ENCODE measurements at regions of chr2 and their contacts with region 1.

Region 1: DNA sequence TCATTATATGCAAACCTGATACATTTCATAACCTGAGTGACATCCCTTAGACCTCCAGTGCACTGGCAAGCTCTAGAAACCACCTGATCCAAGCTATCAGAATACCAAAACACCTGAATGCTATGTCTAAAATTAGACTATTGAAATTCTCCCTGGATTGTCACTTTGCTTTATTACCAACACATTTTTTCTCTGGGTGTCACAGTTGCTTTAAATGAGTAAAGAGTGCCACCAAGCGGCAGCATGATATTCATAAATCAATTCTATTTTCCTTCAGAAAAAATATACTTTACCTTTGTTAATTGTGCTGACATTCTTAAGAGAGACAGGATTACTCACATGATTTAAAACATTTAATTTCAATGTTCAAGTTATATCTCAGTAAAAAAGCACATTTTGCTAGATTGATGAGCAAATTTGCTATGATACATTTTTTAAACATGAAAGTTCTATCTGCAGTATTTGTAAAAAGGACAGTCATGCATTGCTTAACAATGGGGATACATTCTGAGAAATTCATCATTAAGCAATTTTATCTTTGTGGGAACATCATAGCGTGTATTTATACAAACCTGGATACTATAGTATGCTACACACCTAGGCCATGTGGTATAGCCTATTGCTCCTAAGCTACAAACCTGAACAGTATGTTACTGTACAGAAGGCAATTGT is 338.4 kb upstream of the SLC39A10 start:
- DNase-seq: peak in 1 of 2 experiments; percentile 43
- H3K4me3 ChIP-seq: no peak overlapping the region
- H3K4me3 Mint-ChIP-seq: no peak overlapping the region
- H3K27ac Mint-ChIP-seq: no peak overlapping the region
- H3K4me1 ChIP-seq: peaks cover 7% of the 10 kb centered on the region; the same call in 1 of the 2 replicates
- H3K4me1 Mint-ChIP-seq: no peaks in the 10 kb centered on the region
- H3K27me3 ChIP-seq: no peaks in the 10 kb centered on the region
- H3K27me3 Mint-ChIP-seq: no peaks in the 10 kb centered on the region
- CTCF ChIP-seq: peak; percentile 38 to 69

Region 2: DNA sequence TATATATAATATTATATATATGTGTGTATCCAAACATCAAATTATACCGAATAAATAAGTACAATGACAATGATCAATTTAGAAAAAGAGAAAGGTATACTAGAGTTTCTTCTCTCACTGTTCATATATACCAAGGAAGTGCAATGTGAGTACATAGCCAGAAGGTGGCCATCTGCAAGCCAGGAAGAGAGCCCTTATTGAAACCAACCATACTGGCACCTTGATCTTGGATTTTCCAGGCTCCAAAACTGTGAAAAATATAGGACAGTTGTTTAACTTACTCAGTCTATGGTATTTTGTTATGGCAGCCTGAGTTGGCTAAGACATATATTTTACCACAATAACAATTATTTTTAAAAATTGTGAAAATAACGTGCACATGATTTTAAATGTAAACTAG is 1151.8 kb before region 1 on chr2:
- CTCF ChIA-PET with region 1: no interaction called
- POLR2A ChIA-PET with region 1: no interaction called
- intact Hi-C with region 1: loop called (anchors 1 kb)
- DNase-seq: peak in 1 of 2 experiments; percentile 15
- H3K4me3 ChIP-seq: no peak overlapping the region
- H3K4me3 Mint-ChIP-seq: no peak overlapping the region
- H3K27ac Mint-ChIP-seq: no peak overlapping the region
- H3K4me1 ChIP-seq: no peaks in the 10 kb centered on the region
- H3K4me1 Mint-ChIP-seq: no peaks in the 10 kb centered on the region
- H3K27me3 ChIP-seq: no peaks in the 10 kb centered on the region
- H3K27me3 Mint-ChIP-seq: peaks cover 3% of the 10 kb centered on the region
- CTCF ChIP-seq: peak; percentile 66 to 75

Region 3: GRCh38 chr2:194545978-194546377 is 772.6 kb before region 1 on chr2:
- CTCF ChIA-PET with region 1: no interaction called
- POLR2A ChIA-PET with region 1: no interaction called
- intact Hi-C with region 1: loop called (anchors 1 kb)
- DNase-seq: no peak
- H3K4me3 ChIP-seq: no peak overlapping the region
- H3K4me3 Mint-ChIP-seq: no peak overlapping the region
- H3K27ac Mint-ChIP-seq: no peak overlapping the region
- H3K4me1 ChIP-seq: peaks cover 8% of the 10 kb centered on the region; the same call in 1 of the 2 replicates
- H3K4me1 Mint-ChIP-seq: no peaks in the 10 kb centered on the region
- H3K27me3 ChIP-seq: no peaks in the 10 kb centered on the region
- H3K27me3 Mint-ChIP-seq: no peaks in the 10 kb centered on the region
- CTCF ChIP-seq: peak in 1 of 2 experiments; percentile 9

Region 4: DNA sequence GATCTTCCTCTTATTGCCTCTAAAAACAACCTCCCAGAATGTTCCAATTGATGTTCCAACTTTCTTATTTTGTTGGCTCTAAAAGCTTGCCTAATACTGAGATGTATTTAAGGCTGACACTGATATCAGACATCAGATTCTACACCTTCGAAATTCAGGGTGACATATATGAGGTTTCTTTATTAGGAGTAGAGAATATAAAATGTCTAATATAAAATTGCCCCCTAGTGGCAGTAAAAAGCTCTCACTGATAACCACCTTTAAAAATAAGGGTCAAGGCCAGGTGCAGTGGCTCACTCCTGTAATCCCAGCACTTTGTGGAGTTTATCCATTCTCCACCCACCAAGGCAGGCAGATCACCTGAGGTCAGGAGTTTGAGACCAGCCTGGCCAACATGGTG is 451.2 kb before region 1 on chr2:
- CTCF ChIA-PET with region 1: no interaction called
- POLR2A ChIA-PET with region 1: no interaction called
- intact Hi-C with region 1: loop called (anchors 2 kb)
- DNase-seq: no peak
- H3K4me3 ChIP-seq: no peak overlapping the region
- H3K4me3 Mint-ChIP-seq: no peak overlapping the region
- H3K27ac Mint-ChIP-seq: no peak overlapping the region
- H3K4me1 ChIP-seq: no peaks in the 10 kb centered on the region
- H3K4me1 Mint-ChIP-seq: no peaks in the 10 kb centered on the region
- H3K27me3 ChIP-seq: no peaks in the 10 kb centered on the region
- H3K27me3 Mint-ChIP-seq: no peaks in the 10 kb centered on the region
- CTCF ChIP-seq: peak; percentile 21 to 51

Region 5: DNA sequence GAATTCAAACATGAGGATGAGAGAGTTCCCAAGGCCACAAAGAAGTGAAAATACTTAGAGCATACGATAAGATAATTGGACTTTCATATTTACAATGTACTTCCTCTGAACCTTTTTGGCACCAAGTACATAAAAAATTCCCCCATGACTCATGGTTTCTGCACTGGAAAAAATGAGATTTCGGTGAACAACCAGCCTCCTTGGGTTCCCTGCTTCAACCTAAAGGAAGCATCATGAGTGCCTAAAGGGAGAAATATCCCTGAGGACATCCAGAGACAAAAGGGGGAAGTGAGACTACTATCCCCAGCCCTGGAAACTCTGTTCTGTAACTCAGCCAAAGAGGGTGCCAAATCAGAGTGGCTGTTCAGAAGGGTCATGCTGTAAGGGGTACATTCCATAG is 224.2 kb before region 1 on chr2:
- CTCF ChIA-PET with region 1: interaction called, 5 read pairs
- POLR2A ChIA-PET with region 1: no interaction called
- intact Hi-C with region 1: loop called (anchors 5 kb)
- DNase-seq: no peak
- H3K4me3 ChIP-seq: no peak overlapping the region
- H3K4me3 Mint-ChIP-seq: no peak overlapping the region
- H3K27ac Mint-ChIP-seq: no peak overlapping the region
- H3K4me1 ChIP-seq: no peaks in the 10 kb centered on the region
- H3K4me1 Mint-ChIP-seq: no peaks in the 10 kb centered on the region
- H3K27me3 ChIP-seq: no peaks in the 10 kb centered on the region
- H3K27me3 Mint-ChIP-seq: no peaks in the 10 kb centered on the region
- CTCF ChIP-seq: no peak

Region 6: DNA sequence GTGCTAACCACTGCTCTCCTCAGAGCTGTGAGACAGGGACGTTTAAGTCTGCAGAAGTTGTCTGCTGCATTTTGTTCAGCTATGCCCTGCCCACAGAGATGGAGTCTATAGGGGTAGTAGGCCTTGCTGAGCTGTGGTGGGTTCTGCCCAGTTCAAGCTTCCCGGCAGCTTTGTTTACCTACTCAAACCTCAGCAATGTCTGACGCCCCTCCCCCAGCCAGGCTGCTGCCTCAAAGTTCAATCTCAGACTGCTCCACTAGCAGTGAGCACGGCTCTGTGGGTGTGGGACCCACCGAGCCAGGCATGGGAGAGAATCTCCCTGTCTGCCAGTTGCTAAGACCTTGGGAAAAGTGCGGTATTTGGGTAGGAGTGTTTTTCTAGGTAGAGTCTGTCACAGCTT is 49.4 kb before region 1 on chr2:
- CTCF ChIA-PET with region 1: no interaction called
- POLR2A ChIA-PET with region 1: no interaction called
- intact Hi-C with region 1: no loop called
- DNase-seq: no peak
- H3K4me3 ChIP-seq: no peak overlapping the region
- H3K4me3 Mint-ChIP-seq: no peak overlapping the region
- H3K27ac Mint-ChIP-seq: no peak overlapping the region
- H3K4me1 ChIP-seq: no peaks in the 10 kb centered on the region
- H3K4me1 Mint-ChIP-seq: no peaks in the 10 kb centered on the region
- H3K27me3 ChIP-seq: no peaks in the 10 kb centered on the region
- H3K27me3 Mint-ChIP-seq: no peaks in the 10 kb centered on the region
- CTCF ChIP-seq: no peak

Region 7: GRCh38 chr2:195304310-195304709 is 14.3 kb before region 1 on chr2:
- CTCF ChIA-PET with region 1: no interaction called
- POLR2A ChIA-PET with region 1: no interaction called
- intact Hi-C with region 1: no loop called
- DNase-seq: peak; percentile 25 to 35
- H3K4me3 ChIP-seq: no peak overlapping the region
- H3K4me3 Mint-ChIP-seq: no peak overlapping the region
- H3K27ac Mint-ChIP-seq: no peak overlapping the region
- H3K4me1 ChIP-seq: peaks cover 10% of the 10 kb centered on the region
- H3K4me1 Mint-ChIP-seq: no peaks in the 10 kb centered on the region
- H3K27me3 ChIP-seq: no peaks in the 10 kb centered on the region
- H3K27me3 Mint-ChIP-seq: no peaks in the 10 kb centered on the region
- CTCF ChIP-seq: peak; percentile 14 to 17

Region 8: DNA sequence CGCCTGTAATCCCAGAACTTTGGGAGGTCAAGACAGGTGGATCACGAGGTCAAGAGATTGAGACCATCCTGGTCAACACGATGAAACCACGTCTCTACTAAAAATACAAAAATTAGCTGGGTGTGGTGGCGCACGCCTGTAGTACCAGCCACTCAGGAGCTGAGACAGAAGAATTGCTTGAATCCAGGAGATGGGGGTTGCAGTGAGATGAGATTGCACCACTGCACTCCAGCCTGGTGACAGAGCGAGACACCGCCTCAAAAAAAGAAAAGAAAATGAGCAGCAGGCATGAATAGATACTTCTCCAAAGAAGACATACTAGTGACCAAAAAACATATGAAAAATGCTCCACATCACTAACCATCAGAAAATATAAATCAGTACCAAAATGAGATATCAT is 611.5 kb after region 1 on chr2:
- CTCF ChIA-PET with region 1: no interaction called
- POLR2A ChIA-PET with region 1: no interaction called
- intact Hi-C with region 1: loop called (anchors 10 kb)
- DNase-seq: no peak
- H3K4me3 ChIP-seq: no peak overlapping the region
- H3K4me3 Mint-ChIP-seq: no peak overlapping the region
- H3K27ac Mint-ChIP-seq: no peak overlapping the region
- H3K4me1 ChIP-seq: no peaks in the 10 kb centered on the region
- H3K4me1 Mint-ChIP-seq: no peaks in the 10 kb centered on the region
- H3K27me3 ChIP-seq: no peaks in the 10 kb centered on the region
- H3K27me3 Mint-ChIP-seq: no peaks in the 10 kb centered on the region
- CTCF ChIP-seq: no peak

Region 9: DNA sequence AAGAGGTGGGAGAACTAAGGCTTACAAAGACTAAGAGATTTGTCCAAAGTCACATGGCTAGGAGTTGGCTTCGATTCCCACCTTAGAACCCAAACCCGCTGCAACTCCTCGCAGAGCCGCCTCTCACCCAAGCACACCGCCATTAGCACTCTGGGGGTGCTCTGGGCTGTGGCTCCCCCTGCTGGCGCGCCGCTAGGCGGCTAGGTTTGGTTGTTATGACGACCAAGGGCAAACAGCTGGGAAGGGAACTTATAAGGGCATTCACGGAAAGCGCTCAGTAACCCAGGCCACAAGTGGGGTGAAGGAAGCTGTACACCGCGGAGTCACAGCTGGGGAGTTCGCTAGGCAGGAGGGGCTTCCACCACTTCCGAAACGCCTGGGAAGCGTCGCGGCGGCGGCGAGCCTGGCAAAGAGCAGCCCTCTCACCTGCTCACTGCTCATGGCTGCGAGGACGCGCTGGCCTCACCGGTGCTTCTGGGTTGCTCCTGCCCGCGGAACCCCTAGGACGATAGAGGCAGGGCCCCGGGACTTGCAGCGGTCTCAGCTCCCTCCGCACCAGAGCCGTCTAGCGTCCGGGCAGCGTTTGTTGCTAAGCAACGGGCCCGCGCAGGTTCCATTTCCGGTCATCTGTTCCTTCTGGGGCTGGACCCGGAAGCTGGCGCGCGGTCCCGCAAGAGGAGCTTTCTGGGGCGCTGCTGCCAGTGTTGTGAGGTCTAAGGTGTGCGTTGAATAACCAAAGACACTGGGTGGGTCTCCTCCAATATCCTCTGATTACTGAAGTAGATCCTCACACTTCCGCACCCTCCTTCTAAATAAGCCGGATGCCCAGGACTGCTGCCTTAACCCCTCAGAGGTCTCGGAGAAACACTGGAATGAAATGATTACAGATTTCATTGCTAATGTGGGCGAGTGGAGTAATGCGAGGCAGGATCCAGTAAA is 750.0 kb after region 1 on chr2 and contains the start of gene DNAH7:
- CTCF ChIA-PET with region 1: no interaction called
- POLR2A ChIA-PET with region 1: no interaction called
- intact Hi-C with region 1: loop called (anchors 10 kb)
- DNase-seq: peak; percentile 89 to 94
- H3K4me3 ChIP-seq: peak within 1 kb of the TSS; percentile 75
- H3K4me3 Mint-ChIP-seq: peak within 1 kb of the TSS; percentile 90
- H3K27ac Mint-ChIP-seq: peak within 1 kb of the TSS; percentile 97
- H3K4me1 ChIP-seq: peaks cover 4% of the 10 kb centered on the region; the same call in 1 of the 2 replicates
- H3K4me1 Mint-ChIP-seq: no peaks in the 10 kb centered on the region
- H3K27me3 ChIP-seq: no peaks in the 10 kb centered on the region
- H3K27me3 Mint-ChIP-seq: peaks cover 3% of the 10 kb centered on the region
- CTCF ChIP-seq: peak; percentile 86 to 97
- total RNA-seq, gene DNAH7: 0.16 and 0.30 TPM in 2 replicates

Measured in Caco-2 (cell line).